A673 (cell line): ENCODE measurements at regions of chr2 and their contacts with region 1.

Region 1: GRCh38 chr2:167550448-167550847 is 662.2 kb downstream of the XIRP2 start:
- DNase-seq: peak; percentile 38
- H3K4me3 ChIP-seq: no peak overlapping the region
- H3K27ac ChIP-seq: no peak overlapping the region
- H3K4me1 ChIP-seq: no peaks in the 10 kb centered on the region
- H3K27me3 ChIP-seq: no peaks in the 10 kb centered on the region
- CTCF ChIP-seq: peak; percentile 63

Region 2: GRCh38 chr2:167264380-167264779 is 286.1 kb before region 1 on chr2:
- CTCF ChIA-PET with region 1: interaction called, 4 read pairs
- POLR2A ChIA-PET with region 1: no interaction called
- intact Hi-C with region 1: loop called (anchors 5 kb)
- DNase-seq: peak; percentile 49
- H3K4me3 ChIP-seq: no peak overlapping the region
- H3K27ac ChIP-seq: no peak overlapping the region
- H3K4me1 ChIP-seq: no peaks in the 10 kb centered on the region
- H3K27me3 ChIP-seq: no peaks in the 10 kb centered on the region
- CTCF ChIP-seq: peak; percentile 68

Region 3: GRCh38 chr2:167342769-167343168 is 207.7 kb before region 1 on chr2:
- CTCF ChIA-PET with region 1: no interaction called
- POLR2A ChIA-PET with region 1: no interaction called
- intact Hi-C with region 1: no loop called
- DNase-seq: no peak
- H3K4me3 ChIP-seq: no peak overlapping the region
- H3K27ac ChIP-seq: no peak overlapping the region
- H3K4me1 ChIP-seq: no peaks in the 10 kb centered on the region
- H3K27me3 ChIP-seq: no peaks in the 10 kb centered on the region
- CTCF ChIP-seq: 0 out of 2 replicates have a peak, but pooled peaks have one; percentile 24